ENCODE measurements at regions of chr2 and their contacts with region 1.

Region 1: GRCh38 chr2:206159346-206160124 is at the starts of genes EEF1B2 and NDUFS1:
- DNase-seq: peak; percentile 96 to 99
- H3K4me3 ChIP-seq: peak within 1 kb of the TSS; percentile 74
- CTCF ChIP-seq: no peak
- POLR2A ChIP-seq: peak in 1 of 2 donors; percentile 26
- total RNA-seq, gene EEF1B2: 483 to 986 (median 575) TPM
- total RNA-seq, gene NDUFS1: 62.5 to 105 (median 79.9) TPM

Region 2: GRCh38 chr2:206056286-206056685 is 103.2 kb before region 1 on chr2:
- intact Hi-C with region 1: no loop called
- DNase-seq: no peak
- H3K4me3 ChIP-seq: no peak overlapping the region
- CTCF ChIP-seq: no peak
- POLR2A ChIP-seq: no peak

Region 3: DNA sequence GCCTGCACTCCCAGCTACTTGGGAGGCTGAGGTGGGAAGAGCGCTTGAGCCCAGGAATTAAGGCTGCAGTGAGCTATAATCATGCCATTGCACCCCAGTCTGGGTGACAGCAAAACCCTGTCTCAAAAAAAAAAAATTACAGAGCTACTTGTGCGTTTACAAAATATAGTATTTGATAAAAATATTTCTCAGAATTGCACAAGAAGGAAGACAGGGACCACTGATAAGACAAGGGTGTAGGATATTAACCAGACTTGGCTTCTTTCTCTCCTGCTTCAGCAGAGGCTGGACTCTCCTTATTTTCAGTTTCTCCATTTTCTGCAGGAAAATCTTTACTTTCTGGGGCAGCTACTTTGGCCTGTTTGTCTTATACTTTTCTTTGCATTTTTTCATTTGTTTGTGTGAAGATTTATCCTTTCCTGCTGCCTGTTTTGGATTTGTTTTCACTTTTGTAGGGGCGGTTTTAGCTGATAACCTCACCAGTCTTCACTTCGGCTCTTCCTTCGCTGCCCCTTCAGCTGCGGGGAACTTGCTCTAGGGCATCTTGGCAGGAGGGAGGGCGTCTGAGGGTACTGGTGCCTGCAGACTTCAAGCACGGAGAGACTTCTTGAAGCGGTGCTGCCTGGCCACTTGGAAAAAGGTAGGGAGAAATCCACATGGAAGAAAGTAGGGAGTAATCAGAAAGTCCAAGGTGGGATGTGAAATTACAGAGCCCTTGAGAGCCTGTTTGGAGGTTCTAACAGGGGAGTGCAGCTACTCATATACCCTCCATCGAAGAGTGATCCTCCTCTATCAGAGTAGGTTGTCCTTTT is 100.0 kb after region 1 on chr2:
- intact Hi-C with region 1: loop called (anchors 5 kb)
- DNase-seq: no peak
- H3K4me3 ChIP-seq: no peak overlapping the region
- CTCF ChIP-seq: no peak
- POLR2A ChIP-seq: no peak

Measured in lower leg skin (tissue), 4 donors.